K562 (cell line): ENCODE measurements at regions of chr15 and their contacts with region 1.

Region 1: GRCh38 chr15:36251450-36251849 is 328.0 kb upstream of the CDIN1 start:
- DNase-seq: peak in 1 of 4 experiments; percentile 3
- ATAC-seq: no peak
- H3K4me3 ChIP-seq: no peak overlapping the region
- H3K27ac ChIP-seq: no peak overlapping the region
- H3K4me1 ChIP-seq: no peaks in the 10 kb centered on the region
- H3K27me3 ChIP-seq: no peaks in the 10 kb centered on the region
- CTCF ChIP-seq: no peak
- EP300 ChIP-seq: no peak
- POLR2A ChIP-seq: no peak
- RAD21 ChIP-seq: peak in 1 of 2 experiments; percentile 32; a peak in 2 of 4 replicates

Region 2: GRCh38 chr15:36156879-36157427 is 94.5 kb before region 1 on chr15:
- CTCF ChIA-PET with region 1: no interaction called
- POLR2A ChIA-PET with region 1: no interaction called
- in situ Hi-C with region 1: no loop called
- intact Hi-C with region 1: no loop called
- DNase-seq: no peak
- ATAC-seq: no peak
- H3K4me3 ChIP-seq: no peak overlapping the region
- H3K27ac ChIP-seq: no peak overlapping the region
- H3K4me1 ChIP-seq: no peaks in the 10 kb centered on the region
- H3K27me3 ChIP-seq: no peaks in the 10 kb centered on the region
- CTCF ChIP-seq: no peak
- EP300 ChIP-seq: no peak
- POLR2A ChIP-seq: no peak
- RAD21 ChIP-seq: no peak

Region 3: GRCh38 chr15:36484038-36484778 is 232.8 kb after region 1 on chr15:
- CTCF ChIA-PET with region 1: no interaction called
- POLR2A ChIA-PET with region 1: no interaction called
- in situ Hi-C with region 1: no loop called
- intact Hi-C with region 1: no loop called
- DNase-seq: no peak
- ATAC-seq: no peak
- H3K4me3 ChIP-seq: no peak overlapping the region
- H3K27ac ChIP-seq: no peak overlapping the region
- H3K4me1 ChIP-seq: no peaks in the 10 kb centered on the region
- H3K27me3 ChIP-seq: no peaks in the 10 kb centered on the region
- CTCF ChIP-seq: no peak
- EP300 ChIP-seq: no peak
- POLR2A ChIP-seq: no peak
- RAD21 ChIP-seq: no peak

Region 4: DNA sequence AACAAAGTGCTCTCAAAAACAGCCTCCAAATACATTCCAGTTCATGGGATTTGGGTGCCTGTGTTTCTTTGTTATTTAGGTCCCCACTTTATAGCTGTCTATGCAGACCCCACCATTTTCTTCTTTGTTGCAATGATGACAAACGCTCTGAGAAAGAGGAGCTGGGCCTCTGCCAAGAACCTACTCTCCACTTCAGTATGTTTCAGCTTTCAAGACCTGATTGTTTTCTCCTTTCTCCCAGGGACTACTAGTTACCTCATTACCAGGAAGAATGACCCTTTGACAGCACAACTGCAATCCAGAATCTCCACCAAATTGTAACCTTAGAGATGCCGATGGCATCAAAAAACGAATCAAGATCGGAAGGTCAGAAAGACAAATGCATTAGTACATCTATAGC is 612.1 kb after region 1 on chr15:
- CTCF ChIA-PET with region 1: no interaction called
- POLR2A ChIA-PET with region 1: no interaction called
- in situ Hi-C with region 1: loop called (anchors 25 kb)
- intact Hi-C with region 1: no loop called
- DNase-seq: no peak
- ATAC-seq: no peak
- H3K4me3 ChIP-seq: no peak overlapping the region
- H3K27ac ChIP-seq: no peak overlapping the region
- H3K4me1 ChIP-seq: no peaks in the 10 kb centered on the region
- H3K27me3 ChIP-seq: no peaks in the 10 kb centered on the region; a peak in 1 of 5 replicates
- CTCF ChIP-seq: no peak
- EP300 ChIP-seq: no peak
- POLR2A ChIP-seq: no peak
- RAD21 ChIP-seq: no peak